ENCODE measurements at regions of chr5 and their contacts with region 1.

Region 1: DNA sequence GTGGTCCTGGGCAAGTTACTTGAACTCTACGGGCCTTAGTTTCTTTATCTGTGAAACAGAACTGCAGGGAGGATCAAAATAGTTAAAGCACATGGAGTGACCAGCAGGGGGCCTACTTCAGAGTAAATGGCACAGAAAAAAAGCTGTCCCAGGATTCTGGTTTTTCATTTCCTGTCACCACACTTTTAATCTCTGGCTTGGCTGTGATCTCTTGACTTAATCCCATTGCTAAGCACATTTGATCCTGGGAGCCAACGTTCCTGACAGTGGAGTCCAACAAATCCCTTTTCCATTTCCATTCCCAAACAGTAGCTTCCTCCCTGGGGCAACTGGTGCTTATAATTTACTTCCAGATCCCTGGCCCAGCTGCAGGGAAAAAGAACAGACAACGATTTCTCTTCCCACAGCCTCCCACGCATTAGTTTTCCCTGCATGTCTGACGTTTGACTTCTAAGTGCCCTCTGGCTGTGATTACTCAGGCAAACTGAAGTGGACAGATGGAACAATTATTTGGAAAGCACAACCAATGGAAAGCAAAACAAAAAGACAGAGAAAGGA is 136.5 kb upstream of the STK32A start:
- DNase-seq: peak; percentile 34
- ATAC-seq: peak; percentile 57
- H3K4me3 ChIP-seq: no peak overlapping the region
- H3K27ac ChIP-seq: no peak overlapping the region
- H3K4me1 ChIP-seq: no peaks in the 10 kb centered on the region
- H3K27me3 ChIP-seq: no peaks in the 10 kb centered on the region
- CTCF ChIP-seq: peak; percentile 55
- POLR2A ChIP-seq: no peak
- RAD21 ChIP-seq: peak; percentile 44

Region 2: GRCh38 chr5:146718609-146719008 is 379.7 kb before region 1 on chr5:
- CTCF ChIA-PET with region 1: no interaction called
- POLR2A ChIA-PET with region 1: no interaction called
- dilution Hi-C with region 1: no loop called
- in situ Hi-C with region 1: no loop called
- intact Hi-C with region 1: no loop called
- DNase-seq: no peak
- ATAC-seq: no peak
- H3K4me3 ChIP-seq: no peak overlapping the region
- H3K27ac ChIP-seq: no peak overlapping the region
- H3K4me1 ChIP-seq: no peaks in the 10 kb centered on the region
- H3K27me3 ChIP-seq: no peaks in the 10 kb centered on the region
- CTCF ChIP-seq: no peak
- POLR2A ChIP-seq: no peak
- RAD21 ChIP-seq: no peak

Region 3: DNA sequence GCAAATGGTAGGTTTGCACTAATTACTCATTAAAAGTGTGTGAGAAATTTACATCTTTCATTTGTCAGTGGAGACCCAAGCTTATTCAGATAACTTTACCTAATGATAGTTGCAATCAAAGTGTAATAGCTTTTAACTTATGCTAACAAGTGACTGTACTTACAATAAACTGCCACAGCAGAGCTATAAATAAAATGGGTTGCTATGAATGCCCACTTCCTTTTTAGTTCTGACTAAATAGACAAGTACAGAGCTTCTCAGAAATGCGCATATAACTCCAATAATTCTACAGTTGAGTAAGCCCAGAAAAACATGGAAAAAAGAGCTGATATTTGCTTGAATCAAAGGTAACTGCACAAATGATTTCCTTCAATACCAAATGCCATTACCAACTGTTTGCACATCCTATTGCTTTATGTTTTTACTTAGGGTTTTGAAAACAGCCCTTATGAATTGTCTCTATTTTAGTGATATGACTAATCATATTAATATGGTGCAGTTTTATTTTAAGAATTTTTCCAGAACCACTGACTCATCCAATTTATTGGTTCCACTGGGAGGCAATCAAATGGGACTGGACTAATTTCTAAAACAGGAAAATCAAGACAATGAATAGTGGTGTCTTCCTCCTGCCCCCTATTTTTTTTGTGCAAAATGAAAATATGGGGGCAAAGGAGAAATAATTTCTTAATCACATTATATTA is 303.8 kb before region 1 on chr5:
- CTCF ChIA-PET with region 1: no interaction called
- POLR2A ChIA-PET with region 1: no interaction called
- dilution Hi-C with region 1: no loop called
- in situ Hi-C with region 1: no loop called
- intact Hi-C with region 1: no loop called
- DNase-seq: no peak
- ATAC-seq: no peak
- H3K4me3 ChIP-seq: no peak overlapping the region
- H3K27ac ChIP-seq: no peak overlapping the region
- H3K4me1 ChIP-seq: no peaks in the 10 kb centered on the region
- H3K27me3 ChIP-seq: no peaks in the 10 kb centered on the region
- CTCF ChIP-seq: no peak
- POLR2A ChIP-seq: no peak
- RAD21 ChIP-seq: no peak

Region 4: GRCh38 chr5:146825033-146825432 is 273.3 kb before region 1 on chr5:
- CTCF ChIA-PET with region 1: no interaction called
- POLR2A ChIA-PET with region 1: no interaction called
- dilution Hi-C with region 1: no loop called
- in situ Hi-C with region 1: no loop called
- intact Hi-C with region 1: no loop called
- DNase-seq: peak; percentile 11
- ATAC-seq: no peak
- H3K4me3 ChIP-seq: no peak overlapping the region
- H3K27ac ChIP-seq: no peak overlapping the region
- H3K4me1 ChIP-seq: no peaks in the 10 kb centered on the region
- H3K27me3 ChIP-seq: no peaks in the 10 kb centered on the region
- CTCF ChIP-seq: no peak
- POLR2A ChIP-seq: no peak
- RAD21 ChIP-seq: no peak

Region 5: DNA sequence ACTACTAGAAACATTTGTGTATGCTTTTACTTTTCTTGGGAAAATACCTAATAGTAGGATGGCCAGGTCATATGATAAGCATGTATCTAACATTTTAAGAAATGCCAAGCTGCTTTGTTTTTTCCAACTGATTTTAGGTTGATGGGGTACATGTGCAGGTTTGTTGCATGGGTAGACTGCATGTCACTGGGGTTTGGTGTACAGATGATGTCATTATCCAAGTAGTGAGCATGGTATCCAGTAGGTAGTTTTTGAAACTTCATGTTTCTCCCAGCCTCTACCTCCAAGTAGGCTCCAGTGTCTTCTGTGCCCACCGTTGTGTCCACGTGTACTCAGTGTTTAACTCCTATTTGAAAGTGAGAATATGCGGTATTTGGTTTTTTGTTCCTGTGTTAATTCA is 11.0 kb before region 1 on chr5:
- CTCF ChIA-PET with region 1: no interaction called
- POLR2A ChIA-PET with region 1: no interaction called
- dilution Hi-C with region 1: no loop called
- in situ Hi-C with region 1: no loop called
- intact Hi-C with region 1: loop called (anchors 1 kb)
- DNase-seq: no peak
- ATAC-seq: no peak
- H3K4me3 ChIP-seq: no peak overlapping the region
- H3K27ac ChIP-seq: no peak overlapping the region
- H3K4me1 ChIP-seq: no peaks in the 10 kb centered on the region
- H3K27me3 ChIP-seq: no peaks in the 10 kb centered on the region
- CTCF ChIP-seq: no peak
- POLR2A ChIP-seq: no peak
- RAD21 ChIP-seq: no peak

Measured in IMR-90 (cell line).